WTC11 (cell line): ENCODE measurements at regions of chr13 and their contacts with region 1.

Region 1: GRCh38 chr13:43884222-43884621 is 4.5 kb downstream of the LACC1 start:
- DNase-seq: no peak
- ATAC-seq: peak; percentile 16; the same call in 1 of the 2 replicates
- H3K4me3 Mint-ChIP-seq: no peak overlapping the region
- H3K27ac Mint-ChIP-seq: no peak overlapping the region
- H3K4me1 Mint-ChIP-seq: peaks cover 20% of the 10 kb centered on the region
- H3K27me3 Mint-ChIP-seq: peaks cover 22% of the 10 kb centered on the region
- CTCF ChIP-seq: no peak

Region 2: GRCh38 chr13:43848001-43848649 is 36.1 kb before region 1 on chr13:
- CTCF ChIA-PET with region 1: no interaction called
- POLR2A ChIA-PET with region 1: no interaction called
- DNase-seq: no peak
- ATAC-seq: no peak
- H3K4me3 Mint-ChIP-seq: no peak overlapping the region
- H3K27ac Mint-ChIP-seq: no peak overlapping the region
- H3K4me1 Mint-ChIP-seq: no peaks in the 10 kb centered on the region
- H3K27me3 Mint-ChIP-seq: no peaks in the 10 kb centered on the region; the same call in none of the 2 replicates
- CTCF ChIP-seq: no peak

Region 3: GRCh38 chr13:43894438-43894837 is 10.2 kb after region 1 on chr13:
- CTCF ChIA-PET with region 1: interaction called, 10 read pairs
- POLR2A ChIA-PET with region 1: no interaction called
- DNase-seq: no peak
- ATAC-seq: no peak
- H3K4me3 Mint-ChIP-seq: no peak overlapping the region
- H3K27ac Mint-ChIP-seq: no peak overlapping the region
- H3K4me1 Mint-ChIP-seq: 0 out of 2 replicates have a peak, but pooled peaks cover 4% of the 10 kb centered on the region
- H3K27me3 Mint-ChIP-seq: no peaks in the 10 kb centered on the region; the same call in 1 of the 2 replicates
- CTCF ChIP-seq: no peak